Activated CD8-positive, alpha-beta T cell treated with anti-CD3 and anti-CD28 coated beads, Interleukin-2, amount 10 ng/mL, durations not matched to agents 7 days and 5 days (primary cell): ENCODE measurements at regions of chr11 and their contacts with region 1.

Region 1: DNA sequence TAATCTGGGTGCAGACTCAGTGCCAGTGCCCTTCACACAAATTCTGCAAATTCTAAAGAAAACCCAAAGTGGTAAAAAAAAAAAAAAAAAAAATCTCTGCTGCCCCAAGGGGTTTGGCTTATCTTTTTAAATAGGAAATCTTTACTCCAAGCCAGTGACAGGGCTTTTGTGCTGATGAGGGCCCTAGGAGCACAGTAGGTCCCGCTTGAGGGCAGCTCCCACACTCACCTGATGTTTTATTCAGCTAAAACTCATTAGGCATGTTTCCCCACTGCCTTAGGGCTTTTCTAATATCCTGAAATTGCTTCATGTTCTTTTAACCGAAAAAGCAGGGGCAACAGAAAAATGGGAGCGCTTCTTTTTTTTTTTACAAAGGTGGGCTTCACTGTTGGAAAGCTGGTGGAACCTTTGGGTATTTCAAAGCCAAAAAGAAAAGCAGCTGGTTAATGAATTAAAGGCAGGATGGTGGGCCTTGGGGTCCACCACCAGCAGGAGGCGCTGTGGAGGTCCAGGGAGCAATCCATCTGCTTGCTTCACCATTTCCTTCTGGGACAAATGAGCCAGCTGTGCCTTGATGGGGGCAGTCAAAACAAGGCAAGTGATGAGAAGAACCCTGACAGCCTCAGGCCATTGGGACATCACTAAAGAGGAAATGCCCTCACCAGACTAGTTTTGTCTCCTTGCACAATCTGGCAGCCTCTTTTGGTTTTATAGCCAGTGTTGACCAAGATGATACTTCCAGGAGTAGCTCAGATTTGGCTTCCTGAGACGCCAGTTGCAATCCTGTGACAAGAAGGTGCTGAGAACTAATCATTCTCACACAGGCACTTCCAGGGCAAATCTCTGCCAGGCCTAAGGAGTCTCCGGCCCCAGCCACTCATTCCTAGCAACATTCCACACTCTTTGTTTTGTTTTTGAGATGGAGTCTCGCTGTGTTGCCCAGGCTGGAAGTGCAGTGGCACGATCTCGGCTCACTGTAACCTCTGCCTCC is 38.4 kb upstream of the WEE1 start:
- DNase-seq: peak; percentile 84
- ATAC-seq: peak; percentile 72
- H3K4me3 Mint-ChIP-seq: no peak overlapping the region
- H3K27ac Mint-ChIP-seq: no peak overlapping the region
- H3K4me1 Mint-ChIP-seq: peaks cover 5% of the 10 kb centered on the region
- H3K27me3 Mint-ChIP-seq: no peaks in the 10 kb centered on the region

Region 2: GRCh38 chr11:9193321-9193720 is 341.8 kb before region 1 on chr11:
- CTCF ChIA-PET with region 1: no interaction called
- POLR2A ChIA-PET with region 1: no interaction called
- DNase-seq: no peak
- ATAC-seq: no peak
- H3K4me3 Mint-ChIP-seq: no peak overlapping the region
- H3K27ac Mint-ChIP-seq: no peak overlapping the region
- H3K4me1 Mint-ChIP-seq: peaks cover 5% of the 10 kb centered on the region
- H3K27me3 Mint-ChIP-seq: no peaks in the 10 kb centered on the region

Region 3: GRCh38 chr11:9550191-9550628 is 15.1 kb after region 1 on chr11:
- CTCF ChIA-PET with region 1: interaction called, 22 read pairs
- POLR2A ChIA-PET with region 1: no interaction called
- DNase-seq: no peak
- ATAC-seq: no peak
- H3K4me3 Mint-ChIP-seq: no peak overlapping the region
- H3K27ac Mint-ChIP-seq: no peak overlapping the region
- H3K4me1 Mint-ChIP-seq: no peaks in the 10 kb centered on the region
- H3K27me3 Mint-ChIP-seq: no peaks in the 10 kb centered on the region

Region 4: GRCh38 chr11:9573052-9573774 is 38.1 kb after region 1 on chr11 and contains the start of gene WEE1:
- CTCF ChIA-PET with region 1: interaction called, 47 read pairs
- POLR2A ChIA-PET with region 1: interaction called, 4 read pairs
- DNase-seq: peak; percentile 98
- ATAC-seq: peak; percentile 96
- H3K4me3 Mint-ChIP-seq: peak within 1 kb of the TSS; percentile 98
- H3K27ac Mint-ChIP-seq: peak within 1 kb of the TSS; percentile 87
- H3K4me1 Mint-ChIP-seq: peaks cover 46% of the 10 kb centered on the region
- H3K27me3 Mint-ChIP-seq: peaks cover 14% of the 10 kb centered on the region
- total RNA-seq, gene WEE1: 73.3 to 75.1 TPM

Region 5: GRCh38 chr11:9601037-9601875 is 66.2 kb after region 1 on chr11:
- CTCF ChIA-PET with region 1: interaction called, 14 read pairs
- POLR2A ChIA-PET with region 1: no interaction called
- DNase-seq: peak; percentile 89
- ATAC-seq: peak; percentile 92
- H3K4me3 Mint-ChIP-seq: peak overlapping the region; percentile 72
- H3K27ac Mint-ChIP-seq: peak overlapping the region; percentile 71
- H3K4me1 Mint-ChIP-seq: peaks cover 31% of the 10 kb centered on the region
- H3K27me3 Mint-ChIP-seq: peaks cover 11% of the 10 kb centered on the region

Region 6: DNA sequence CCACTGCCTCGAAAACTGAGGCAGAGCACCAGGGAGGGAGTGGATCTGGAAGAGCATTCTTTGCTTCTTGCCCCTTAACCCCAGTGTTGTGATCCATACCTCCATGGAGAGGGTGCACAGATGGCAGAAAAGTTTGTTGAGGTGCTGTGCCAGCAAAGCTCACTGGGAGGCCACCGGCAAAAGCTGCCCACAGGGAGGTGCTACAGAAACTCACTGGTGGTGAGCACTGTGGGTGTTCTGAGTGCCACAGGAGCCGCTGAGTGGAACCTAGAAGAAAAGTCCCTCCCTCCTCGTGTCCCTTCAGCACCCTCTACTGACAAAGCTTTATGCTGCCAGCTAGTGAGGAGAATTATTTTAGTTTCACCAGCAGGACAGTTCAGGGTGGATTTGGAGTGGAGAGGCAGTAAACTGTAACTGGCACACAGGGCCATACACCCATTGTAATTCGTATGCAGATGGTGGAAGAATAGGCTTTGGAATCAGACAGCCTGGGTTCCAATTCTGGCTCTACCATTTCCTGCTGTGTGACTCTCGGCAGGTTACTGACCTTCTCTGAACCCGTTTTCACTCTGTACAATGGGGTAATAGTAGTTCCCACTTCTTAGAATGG is 213.4 kb after region 1 on chr11:
- CTCF ChIA-PET with region 1: interaction called, 107 read pairs
- POLR2A ChIA-PET with region 1: no interaction called
- DNase-seq: peak; percentile 84
- ATAC-seq: peak; percentile 99
- H3K4me3 Mint-ChIP-seq: no peak overlapping the region
- H3K27ac Mint-ChIP-seq: no peak overlapping the region
- H3K4me1 Mint-ChIP-seq: peaks cover 21% of the 10 kb centered on the region
- H3K27me3 Mint-ChIP-seq: no peaks in the 10 kb centered on the region